Gastrocnemius medialis (tissue), 4 donors: ENCODE measurements at regions of chr5 and their contacts with region 1.

Region 1: DNA sequence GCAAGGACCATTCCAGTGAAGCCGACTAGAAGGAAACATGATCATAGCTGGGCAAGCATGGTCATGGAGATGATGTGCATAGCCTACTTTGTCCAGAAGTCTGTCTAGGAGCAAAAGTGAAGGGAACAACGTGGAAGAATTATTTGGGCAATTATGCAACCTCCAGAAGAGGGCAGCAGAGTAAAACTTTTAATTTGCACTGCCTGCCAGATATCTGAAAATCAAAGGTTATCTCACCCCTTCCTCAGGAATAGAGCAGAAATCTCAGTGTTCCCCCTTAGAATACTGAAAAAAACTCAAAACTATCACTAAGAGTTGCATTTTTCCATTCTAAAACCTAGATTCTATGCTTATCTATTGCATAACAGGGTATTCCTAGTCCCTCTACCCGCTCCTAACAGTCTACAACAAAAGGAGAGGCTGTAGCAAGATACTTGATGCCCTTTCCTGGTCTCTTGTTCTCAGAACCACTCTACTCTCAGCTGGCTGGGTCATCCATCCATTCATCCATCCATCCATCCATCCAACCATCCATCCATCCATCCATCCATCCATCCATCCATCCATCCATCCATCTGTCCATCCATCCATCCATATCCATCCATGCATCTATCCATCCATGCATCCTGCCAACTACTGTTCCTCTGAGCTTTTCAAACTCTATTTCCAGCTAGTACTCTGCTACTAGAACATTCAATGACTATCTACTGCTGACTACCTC is 8.4 kb upstream of the SETD9 start:
- DNase-seq: no peak
- ATAC-seq: peak; percentile 58 to 84
- H3K4me3 ChIP-seq: no peak overlapping the region
- H3K27ac ChIP-seq: no peak overlapping the region
- H3K4me1 ChIP-seq: no peaks in the 10 kb centered on the region
- H3K27me3 ChIP-seq: no peaks in the 10 kb centered on the region
- CTCF ChIP-seq: peak; percentile 50 to 73 (median 66)
- POLR2A ChIP-seq: no peak

Region 2: GRCh38 chr5:57277085-57277484 is 376.1 kb after region 1 on chr5:
- in situ Hi-C with region 1: no loop called
- intact Hi-C with region 1: loop called (anchors 5 kb)
- DNase-seq: no peak
- ATAC-seq: no peak
- H3K4me3 ChIP-seq: no peak overlapping the region
- H3K27ac ChIP-seq: no peak overlapping the region
- H3K4me1 ChIP-seq: no peaks in the 10 kb centered on the region
- H3K27me3 ChIP-seq: no peaks in the 10 kb centered on the region
- CTCF ChIP-seq: peak in 1 of 5 experiments; percentile 26
- POLR2A ChIP-seq: no peak